ENCODE measurements at regions of chr4 and their contacts with region 1.

Region 1: DNA sequence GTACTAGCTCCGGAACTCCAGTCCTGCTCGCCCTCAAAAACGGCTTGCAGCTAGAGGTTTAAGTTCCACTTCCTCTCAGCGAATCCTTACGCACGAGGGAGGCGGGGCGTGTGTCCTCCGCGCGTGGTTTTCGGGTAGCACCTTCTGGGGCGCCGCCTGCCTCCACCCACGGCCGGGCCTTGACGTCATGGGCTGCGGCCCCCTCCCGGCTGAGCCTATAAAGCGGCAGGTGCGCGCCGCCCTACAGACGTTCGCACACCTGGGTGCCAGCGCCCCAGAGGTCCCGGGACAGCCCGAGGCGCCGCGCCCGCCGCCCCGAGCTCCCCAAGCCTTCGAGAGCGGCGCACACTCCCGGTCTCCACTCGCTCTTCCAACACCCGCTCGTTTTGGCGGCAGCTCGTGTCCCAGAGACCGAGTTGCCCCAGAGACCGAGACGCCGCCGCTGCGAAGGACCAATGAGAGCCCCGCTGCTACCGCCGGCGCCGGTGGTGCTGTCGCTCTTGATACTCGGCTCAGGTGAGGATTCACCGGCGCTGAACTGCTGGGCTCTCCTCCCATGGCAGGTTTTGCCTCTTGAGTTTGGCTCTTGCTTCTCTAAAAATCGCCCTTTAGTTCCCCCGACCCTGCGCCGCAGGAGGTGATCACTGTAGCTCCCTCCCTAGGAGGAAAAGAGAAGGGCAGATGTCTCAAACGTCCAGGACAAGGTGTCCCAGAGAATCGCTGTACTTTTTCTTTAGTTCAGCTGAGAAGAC is at the start of gene AREG:
- DNase-seq: peak; percentile 84
- H3K4me3 Mint-ChIP-seq: peak within 1 kb of the TSS; percentile 80
- H3K27ac Mint-ChIP-seq: no peak within 1 kb of the TSS
- H3K4me1 Mint-ChIP-seq: peaks cover 13% of the 10 kb centered on the region
- H3K27me3 Mint-ChIP-seq: no peaks in the 10 kb centered on the region
- total RNA-seq, gene AREG: 0.25 to 0.90 TPM

Region 2: GRCh38 chr4:74397748-74398426 is 47.2 kb before region 1 on chr4:
- CTCF ChIA-PET with region 1: no interaction called
- POLR2A ChIA-PET with region 1: interaction called, 11 read pairs
- DNase-seq: no peak
- H3K4me3 Mint-ChIP-seq: peak overlapping the region; percentile 93
- H3K27ac Mint-ChIP-seq: peak overlapping the region; percentile 88
- H3K4me1 Mint-ChIP-seq: peaks cover 6% of the 10 kb centered on the region
- H3K27me3 Mint-ChIP-seq: peaks cover 2% of the 10 kb centered on the region